Posterior vena cava (tissue), 2 donors: ENCODE measurements at regions of chr3 and their contacts with region 1.

Region 1: DNA sequence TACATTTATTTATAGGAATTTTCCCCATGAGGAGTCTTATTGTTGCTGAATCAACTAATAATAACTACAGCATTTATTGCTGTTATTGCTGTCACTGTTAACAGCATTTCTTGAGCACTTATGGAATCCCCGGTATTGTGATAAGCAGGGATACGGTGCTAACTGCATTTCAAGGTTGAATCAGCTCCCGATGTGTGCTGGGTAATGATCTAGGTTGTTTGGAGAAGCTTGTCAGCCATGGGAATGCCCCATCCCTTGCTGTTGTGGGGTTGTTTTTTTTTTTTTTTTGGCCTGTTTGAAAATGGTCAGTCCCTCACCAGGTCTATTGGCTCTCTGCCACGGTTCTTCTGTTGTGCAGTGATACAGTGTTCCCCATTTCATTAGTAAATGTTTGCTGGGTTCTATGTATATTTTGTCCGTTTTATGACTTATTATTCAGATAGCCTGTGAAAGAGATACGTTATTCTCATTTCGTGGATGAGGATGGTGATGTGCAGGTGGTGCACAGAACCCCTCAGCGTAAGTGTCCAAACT is 48.5 kb downstream of the MED12L start:
- DNase-seq: no peak

Region 2: GRCh38 chr3:150970665-150971324 is 163.2 kb before region 1 on chr3:
- intact Hi-C with region 1: loop called in 1 of 2 experiments (anchors 5 kb)
- DNase-seq: no peak

Region 3: GRCh38 chr3:151168269-151169094 is 34.5 kb after region 1 on chr3:
- intact Hi-C with region 1: no loop called
- DNase-seq: peak; percentile 95

Region 4: DNA sequence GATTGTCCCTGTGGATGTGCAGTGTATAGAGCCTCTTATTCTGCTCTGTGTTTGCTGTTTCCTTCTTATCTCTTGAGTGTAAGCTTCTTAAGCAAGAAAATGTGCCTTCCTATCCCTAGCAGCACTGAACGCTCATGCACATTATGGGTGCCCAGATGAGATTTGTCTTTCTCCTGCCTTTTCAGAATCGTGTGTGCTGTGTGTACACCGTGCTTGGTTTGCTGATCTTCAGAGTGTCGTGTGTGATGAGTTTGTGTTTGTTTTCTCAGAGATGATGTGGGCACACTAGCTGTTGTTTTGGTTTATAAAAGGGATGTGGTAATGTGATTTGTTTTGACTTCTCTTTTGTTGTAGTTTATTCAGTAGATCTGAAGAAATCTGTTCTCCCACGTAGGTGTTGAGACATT is 49.3 kb after region 1 on chr3:
- intact Hi-C with region 1: no loop called
- DNase-seq: no peak